ENCODE measurements at regions of chr18 and their contacts with region 1.

Region 1: DNA sequence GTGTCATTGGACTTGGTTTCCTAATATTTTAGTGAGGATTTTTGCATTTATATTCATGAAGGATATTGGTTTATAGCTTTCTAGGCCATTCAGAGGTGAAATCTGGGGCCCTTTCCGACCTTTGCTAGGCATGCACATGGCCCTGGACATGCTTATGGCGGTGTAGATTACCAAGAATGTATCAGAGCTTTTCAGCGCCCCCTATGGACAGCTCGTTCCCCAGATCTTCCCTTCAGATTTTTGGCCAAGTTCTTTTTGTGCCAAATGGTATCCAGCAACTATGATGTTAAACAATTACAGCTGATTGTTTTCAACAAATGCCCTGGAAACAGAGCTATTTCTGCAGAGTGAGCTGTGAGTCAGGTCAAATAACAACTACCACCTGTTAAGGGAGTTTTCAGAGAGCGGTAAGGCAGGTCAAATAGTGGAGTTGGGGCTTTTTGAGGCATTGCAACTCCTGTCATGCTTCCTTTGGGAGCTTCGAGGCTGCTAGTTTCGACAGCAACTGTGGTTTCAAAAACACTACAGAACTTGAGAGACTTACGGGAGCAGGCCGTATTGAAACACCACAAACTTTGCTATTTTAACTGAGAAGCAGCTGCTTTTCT is 188.3 kb downstream of the ZNF516 start:
- DNase-seq: peak; percentile 48
- ATAC-seq: peak; percentile 77
- H3K4me3 Mint-ChIP-seq: no peak overlapping the region
- H3K27ac Mint-ChIP-seq: no peak overlapping the region
- H3K4me1 Mint-ChIP-seq: peaks cover 6% of the 10 kb centered on the region; the same call in 1 of the 2 replicates
- H3K27me3 Mint-ChIP-seq: no peaks in the 10 kb centered on the region
- CTCF ChIP-seq: peak; percentile 42; the same call in 1 of the 2 replicates

Region 2: DNA sequence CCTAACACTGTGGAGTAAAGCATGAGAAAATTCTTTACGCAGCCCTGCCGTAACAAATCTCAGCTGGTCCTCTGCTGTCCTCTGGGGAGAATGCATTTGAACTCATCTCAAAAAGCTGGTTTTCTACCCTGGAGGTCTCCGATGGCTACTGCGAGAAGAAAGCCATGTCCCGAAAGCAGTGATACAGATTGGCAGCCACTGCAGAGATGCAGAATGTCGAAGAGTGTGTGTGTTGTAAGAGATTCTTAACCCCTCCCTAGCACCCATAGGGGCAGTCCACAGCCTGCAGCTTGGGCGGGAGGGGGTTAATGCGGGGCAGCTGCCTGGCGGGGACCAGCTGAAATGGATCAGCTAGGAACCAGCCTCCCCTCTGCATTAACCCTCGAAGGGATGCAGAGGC is 47.7 kb before region 1 on chr18:
- CTCF ChIA-PET with region 1: interaction called, 11 read pairs
- POLR2A ChIA-PET with region 1: no interaction called
- DNase-seq: no peak
- ATAC-seq: peak; percentile 74
- H3K4me3 Mint-ChIP-seq: no peak overlapping the region
- H3K27ac Mint-ChIP-seq: no peak overlapping the region
- H3K4me1 Mint-ChIP-seq: peaks cover 59% of the 10 kb centered on the region
- H3K27me3 Mint-ChIP-seq: no peaks in the 10 kb centered on the region
- CTCF ChIP-seq: no peak

Region 3: DNA sequence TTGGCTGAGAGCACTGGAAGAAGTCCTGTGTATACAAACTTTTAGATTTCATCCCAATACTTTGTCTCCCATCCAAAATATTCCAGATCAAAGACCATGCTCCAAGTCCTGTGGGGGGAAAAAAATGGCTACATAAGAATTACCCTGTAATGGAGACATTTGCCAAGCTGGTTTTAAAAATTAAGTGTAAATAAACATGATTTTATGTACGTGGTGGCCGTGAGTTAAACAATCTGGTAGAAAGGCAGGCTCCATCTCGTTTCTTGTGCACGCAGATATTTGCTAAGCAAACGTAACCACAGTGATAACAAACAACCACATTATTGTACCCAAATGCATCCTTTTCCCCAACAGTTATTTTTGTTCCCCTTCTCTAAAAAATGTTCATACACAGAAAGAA is 11.8 kb after region 1 on chr18:
- CTCF ChIA-PET with region 1: interaction called, 30 read pairs
- POLR2A ChIA-PET with region 1: interaction called, 3 read pairs
- DNase-seq: no peak
- ATAC-seq: no peak
- H3K4me3 Mint-ChIP-seq: no peak overlapping the region
- H3K27ac Mint-ChIP-seq: no peak overlapping the region
- H3K4me1 Mint-ChIP-seq: peaks cover 39% of the 10 kb centered on the region
- H3K27me3 Mint-ChIP-seq: no peaks in the 10 kb centered on the region
- CTCF ChIP-seq: no peak

Region 4: DNA sequence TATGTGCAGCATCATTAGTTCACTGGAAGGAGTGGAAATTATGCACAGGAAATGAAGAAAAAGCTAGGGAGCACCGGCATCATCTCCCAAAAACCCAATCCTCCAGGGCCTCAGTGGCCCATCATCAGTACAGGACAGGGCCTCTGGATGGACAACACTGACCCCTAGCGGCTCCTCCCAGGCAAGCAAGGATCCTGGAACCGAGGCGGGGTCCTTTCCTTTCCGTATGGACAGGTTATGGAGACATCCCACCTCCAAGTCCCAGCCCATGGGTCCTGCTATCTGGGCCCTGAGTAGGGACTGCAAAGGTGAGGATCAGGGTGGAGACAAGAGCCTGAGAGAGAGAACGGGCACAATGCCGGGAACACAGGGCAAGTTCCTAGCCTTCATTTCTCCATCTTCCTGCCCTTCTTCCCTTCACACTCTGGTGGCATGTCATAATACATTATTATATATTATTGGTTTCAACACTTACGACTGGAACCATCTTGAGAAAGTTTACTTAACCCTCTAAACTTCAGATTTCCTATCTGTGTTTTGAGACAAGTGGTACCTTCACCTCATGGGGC is 120.0 kb after region 1 on chr18:
- CTCF ChIA-PET with region 1: no interaction called
- POLR2A ChIA-PET with region 1: no interaction called
- DNase-seq: peak; percentile 87
- ATAC-seq: peak; percentile 95
- H3K4me3 Mint-ChIP-seq: no peak overlapping the region
- H3K27ac Mint-ChIP-seq: no peak overlapping the region; the same call in 1 of the 2 replicates
- H3K4me1 Mint-ChIP-seq: peaks cover 47% of the 10 kb centered on the region
- H3K27me3 Mint-ChIP-seq: no peaks in the 10 kb centered on the region
- CTCF ChIP-seq: peak; percentile 84